Psoas muscle (tissue), 8 donors: ENCODE measurements at regions of chr19 and their contacts with region 1.

Region 1: GRCh38 chr19:56403764-56404704 is at the start of gene ZNF583:
- DNase-seq: peak; percentile 97 to 99
- ATAC-seq: peak; percentile 99 to 100 (median 99)
- H3K4me3 ChIP-seq: peak within 1 kb of the TSS; percentile 80
- H3K27ac ChIP-seq: peak within 1 kb of the TSS; percentile 91
- H3K4me1 ChIP-seq: peaks cover 5% of the 10 kb centered on the region
- H3K27me3 ChIP-seq: no peaks in the 10 kb centered on the region
- CTCF ChIP-seq: no peak
- total RNA-seq, gene ZNF583: 2.5 to 5.3 (median 3.1) TPM

Region 2: GRCh38 chr19:56441206-56441792 is 37.3 kb after region 1 on chr19:
- intact Hi-C with region 1: no loop called
- DNase-seq: no peak
- ATAC-seq: no peak
- H3K4me3 ChIP-seq: no peak overlapping the region
- H3K27ac ChIP-seq: no peak overlapping the region
- H3K4me1 ChIP-seq: no peaks in the 10 kb centered on the region
- H3K27me3 ChIP-seq: no peaks in the 10 kb centered on the region
- CTCF ChIP-seq: no peak

Region 3: GRCh38 chr19:56477429-56478338 is 73.7 kb after region 1 on chr19:
- intact Hi-C with region 1: loop called in 1 of 2 experiments (anchors 5 kb)
- DNase-seq: peak; percentile 93 to 94
- ATAC-seq: peak; percentile 96 to 97 (median 97)
- H3K4me3 ChIP-seq: peak overlapping the region; percentile 87
- H3K27ac ChIP-seq: peak overlapping the region; percentile 83
- H3K4me1 ChIP-seq: no peaks in the 10 kb centered on the region
- H3K27me3 ChIP-seq: no peaks in the 10 kb centered on the region
- CTCF ChIP-seq: no peak